Mammary epithelial cell (primary cell): ENCODE measurements at regions of chr10 and their contacts with region 1.

Region 1: DNA sequence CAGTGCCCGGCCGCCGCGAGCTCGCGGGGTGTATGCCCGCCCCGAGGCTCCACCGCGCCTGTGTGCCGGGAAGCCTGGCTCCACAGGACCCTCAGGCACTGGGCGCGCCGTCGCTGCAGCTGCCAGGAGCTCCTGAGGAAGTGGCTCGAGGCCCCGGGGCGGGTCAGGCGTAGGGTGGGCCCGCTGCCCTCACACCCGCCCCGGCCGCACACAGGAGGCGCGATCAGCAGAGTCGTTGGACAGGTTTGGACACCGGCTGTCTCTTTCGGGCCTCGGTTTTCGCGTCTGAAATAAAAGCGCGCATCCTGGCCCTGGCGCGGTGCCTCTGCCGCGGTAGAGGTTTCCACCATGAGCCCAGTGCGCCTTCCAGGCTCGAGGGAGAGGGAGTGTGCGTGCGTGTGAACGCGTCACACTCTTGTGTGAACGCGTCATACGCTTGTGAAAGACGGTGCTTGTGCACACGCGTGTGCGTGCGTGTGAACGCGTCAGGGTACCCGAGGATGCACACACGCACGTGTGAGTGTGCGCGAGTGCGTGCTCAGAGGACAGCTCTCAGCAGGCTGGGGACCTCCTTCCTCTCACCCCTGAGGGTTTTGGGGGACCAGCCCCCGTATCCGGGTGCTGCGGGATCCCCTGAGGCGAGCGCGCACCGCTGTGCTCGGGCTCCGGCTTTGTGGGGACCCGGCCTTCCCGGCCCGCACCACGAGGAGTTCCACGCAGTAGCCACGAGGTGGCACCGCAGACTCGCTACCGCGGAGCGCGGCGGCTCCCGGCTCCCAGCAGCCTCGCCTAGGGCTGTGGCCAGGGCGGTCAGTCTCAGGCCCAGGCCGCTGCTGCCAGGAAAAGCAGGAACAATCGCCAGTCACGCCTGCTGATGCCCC is 83.8 kb downstream of the BMS1 start:
- DNase-seq: peak; percentile 57
- H3K4me3 ChIP-seq: peak overlapping the region in 2 of 3 experiments; percentile 32 to 34
- H3K27ac ChIP-seq: no peak overlapping the region
- H3K4me1 ChIP-seq: peaks cover 10% of the 10 kb centered on the region
- H3K27me3 ChIP-seq: no peaks in the 10 kb centered on the region
- CTCF ChIP-seq: peak; percentile 43 to 78

Region 2: GRCh38 chr10:43093423-43094076 is 227.2 kb after region 1 on chr10:
- CTCF ChIA-PET with region 1: interaction called, 9 read pairs
- dilution Hi-C with region 1: no loop called
- in situ Hi-C with region 1: loop called in 1 of 2 experiments (anchors 5 kb)
- intact Hi-C with region 1: loop called (anchors 1 kb)
- DNase-seq: peak; percentile 31
- H3K4me3 ChIP-seq: no peak overlapping the region
- H3K27ac ChIP-seq: no peak overlapping the region
- H3K4me1 ChIP-seq: no peaks in the 10 kb centered on the region
- H3K27me3 ChIP-seq: no peaks in the 10 kb centered on the region
- CTCF ChIP-seq: peak in 1 of 2 donors; percentile 54

Region 3: GRCh38 chr10:43105102-43105785 is 238.9 kb after region 1 on chr10:
- CTCF ChIA-PET with region 1: no interaction called
- dilution Hi-C with region 1: no loop called
- in situ Hi-C with region 1: loop called in 1 of 2 experiments (anchors 25 kb)
- intact Hi-C with region 1: loop called (anchors 1 kb)
- DNase-seq: peak; percentile 59
- H3K4me3 ChIP-seq: peak overlapping the region; percentile 49 to 50 (median 49)
- H3K27ac ChIP-seq: no peak overlapping the region
- H3K4me1 ChIP-seq: peaks cover 9% of the 10 kb centered on the region
- H3K27me3 ChIP-seq: no peaks in the 10 kb centered on the region
- CTCF ChIP-seq: peak; percentile 85 to 100